Sigmoid colon (tissue), 7 donors: ENCODE measurements at regions of chr1 and their contacts with region 1.

Region 1: DNA sequence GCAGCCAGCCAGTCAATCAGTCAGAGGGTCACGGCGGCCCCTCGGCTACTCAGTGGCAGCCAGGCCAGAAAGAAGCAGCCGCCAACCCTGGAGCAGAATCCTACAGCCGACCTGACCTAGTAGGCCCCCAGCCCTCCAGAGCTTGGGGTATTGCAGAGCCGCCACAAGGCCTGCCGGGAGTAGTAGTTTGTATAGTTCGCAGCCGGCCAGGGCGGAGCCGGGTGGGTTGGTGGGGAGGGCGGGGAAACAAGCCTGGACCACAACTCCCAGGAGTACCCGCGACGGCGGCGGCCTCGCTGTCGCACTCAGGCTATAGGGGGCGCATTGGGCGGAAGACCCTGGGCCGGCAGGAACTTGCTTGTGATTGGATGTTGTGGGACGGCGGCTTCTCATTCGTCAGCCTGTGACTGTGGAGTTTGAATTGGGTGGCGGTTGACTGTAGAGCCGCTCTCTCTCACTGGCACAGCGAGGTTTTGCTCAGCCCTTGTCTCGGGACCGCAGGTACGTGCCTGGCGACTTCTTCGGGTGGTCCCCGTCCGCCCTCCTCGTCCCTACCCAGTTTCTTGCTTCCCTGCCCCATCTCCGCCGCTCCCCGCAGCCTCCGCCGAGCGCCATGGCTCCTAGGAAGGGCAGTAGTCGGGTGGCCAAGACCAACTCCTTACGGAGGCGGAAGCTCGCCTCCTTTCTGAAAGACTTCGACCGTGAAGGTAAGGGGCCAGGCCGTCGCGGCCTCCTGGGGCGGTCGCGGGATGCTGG is at the start of gene CDCA8:
- DNase-seq: peak; percentile 99
- H3K4me3 ChIP-seq: peak within 1 kb of the TSS; percentile 75 to 94 (median 82)
- H3K27ac ChIP-seq: peak within 1 kb of the TSS; percentile 87 to 94 (median 90)
- H3K4me1 ChIP-seq: peaks cover 0 to 37% (median 31%) of the 10 kb centered on the region in 4 donors
- H3K27me3 ChIP-seq: no peaks in the 10 kb centered on the region
- CTCF ChIP-seq: peak in 2 of 4 experiments; percentile 13 to 41
- EP300 ChIP-seq: no peak
- POLR2A ChIP-seq: peak in 1 of 2 donors; percentile 14
- total RNA-seq, gene CDCA8: under 0.01 to 0.55 (median 0.16) TPM in 3 of 4 donors, not detected in the other

Region 2: DNA sequence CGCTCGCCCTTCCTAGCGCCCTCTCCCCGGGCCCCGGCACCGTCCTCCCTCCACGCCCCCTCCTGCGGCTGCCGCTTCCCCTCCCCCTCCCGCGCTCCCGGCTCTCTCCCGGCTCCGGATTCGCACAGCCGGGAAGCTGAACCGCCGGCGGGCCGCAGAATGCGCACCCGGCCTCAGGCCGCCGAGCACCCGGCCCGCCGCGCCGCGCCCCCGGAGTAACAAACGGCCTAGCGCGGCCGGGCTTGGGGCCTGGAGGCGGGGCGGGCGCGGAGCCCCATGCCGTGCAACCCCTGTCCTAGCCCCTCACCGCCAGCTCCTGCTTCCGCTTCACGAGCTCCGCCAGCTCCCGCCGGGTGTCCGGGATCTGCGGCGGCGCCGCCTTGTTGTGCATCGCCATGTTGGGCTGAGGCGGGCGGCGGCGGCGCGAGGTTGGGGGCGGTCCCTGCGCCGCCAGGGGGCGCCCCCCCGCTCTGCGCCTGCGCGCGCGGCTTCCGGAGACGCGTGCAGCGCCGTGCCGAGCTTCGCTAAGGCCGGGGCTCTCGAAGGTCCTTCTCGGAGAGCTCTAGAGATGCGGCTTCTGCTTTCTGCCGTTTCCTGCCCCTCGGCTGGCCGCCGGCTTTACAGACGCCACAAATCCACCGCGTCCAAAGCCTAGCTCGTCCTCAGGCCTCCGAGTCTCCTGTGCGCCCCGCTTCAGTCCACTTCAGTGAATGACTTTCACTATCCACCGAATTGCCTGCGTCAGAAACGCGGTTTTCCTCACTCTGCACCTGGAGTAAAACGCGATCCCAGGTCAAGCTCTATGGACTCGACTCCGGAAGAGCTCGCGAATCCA is 177.7 kb before region 1 on chr1 and contains the start of gene MEAF6:
- intact Hi-C with region 1: loop called (anchors 5 kb)
- DNase-seq: peak; percentile 90
- H3K4me3 ChIP-seq: peak within 1 kb of the TSS; percentile 50 to 99 (median 84)
- H3K27ac ChIP-seq: peak within 1 kb of the TSS; percentile 92 to 98 (median 96)
- H3K4me1 ChIP-seq: peaks cover 0 to 32% (median 20%) of the 10 kb centered on the region in 4 donors
- H3K27me3 ChIP-seq: no peaks in the 10 kb centered on the region
- CTCF ChIP-seq: peak in 2 of 4 experiments; percentile 16 to 82
- EP300 ChIP-seq: no peak
- POLR2A ChIP-seq: peak; percentile 76 to 77
- total RNA-seq, gene MEAF6: 64.0 to 84.5 (median 79.9) TPM

Region 3: GRCh38 chr1:37553927-37554808 is 138.1 kb before region 1 on chr1 and contains the start of gene SNIP1:
- intact Hi-C with region 1: loop called (anchors 5 kb)
- DNase-seq: peak; percentile 97
- H3K4me3 ChIP-seq: peak within 1 kb of the TSS; percentile 85 to 96 (median 93)
- H3K27ac ChIP-seq: peak within 1 kb of the TSS; percentile 86 to 92 (median 90)
- H3K4me1 ChIP-seq: peaks cover 0 to 57% (median 31%) of the 10 kb centered on the region in 4 donors
- H3K27me3 ChIP-seq: no peaks in the 10 kb centered on the region
- CTCF ChIP-seq: no peak
- EP300 ChIP-seq: peak in 1 of 4 donors; percentile 42
- POLR2A ChIP-seq: peak; percentile 64 to 75
- total RNA-seq, gene SNIP1: 7.2 to 20.4 (median 12.8) TPM

Region 4: DNA sequence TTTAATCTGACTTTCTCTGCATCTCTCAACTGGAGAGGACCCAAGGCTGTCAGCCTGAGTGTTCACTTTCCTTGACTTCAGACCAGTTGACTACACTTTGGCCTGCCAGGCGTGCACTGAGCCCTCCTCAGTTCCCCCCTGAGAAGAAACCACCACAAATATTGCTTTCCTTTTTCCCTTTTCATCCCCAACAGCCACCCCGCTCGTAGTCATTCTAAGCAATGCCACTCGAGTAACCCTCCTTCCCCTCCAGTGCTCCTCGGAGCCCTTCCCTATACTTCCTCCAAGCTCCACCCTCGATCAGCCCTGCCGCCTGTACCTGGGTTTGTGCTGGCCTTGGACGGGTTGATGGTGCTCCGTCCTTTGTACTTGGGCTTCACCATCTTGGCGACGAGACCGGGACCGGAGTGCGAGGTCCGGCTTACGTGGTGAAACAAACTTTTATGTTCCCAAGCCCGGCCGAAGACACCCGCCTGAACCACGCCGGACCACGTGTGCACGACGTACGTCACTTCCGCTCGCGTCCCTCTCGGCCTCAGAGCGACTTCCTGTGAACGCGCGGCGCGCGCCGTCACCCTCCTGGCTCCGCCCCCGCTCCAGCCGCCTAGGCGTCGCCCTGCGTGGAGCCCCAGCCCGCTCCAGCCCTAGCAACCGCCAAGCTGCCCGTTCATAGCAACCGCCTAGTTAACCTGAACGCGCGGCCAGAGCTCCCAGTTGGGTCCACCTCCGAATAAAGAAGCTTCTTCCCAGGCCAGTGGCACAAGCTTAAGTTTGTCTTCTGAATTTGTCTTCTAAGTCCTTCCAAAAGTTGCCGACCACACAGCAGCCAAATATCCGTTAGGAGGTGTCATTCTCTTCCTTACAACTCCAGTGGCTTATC is 96.6 kb before region 1 on chr1 and contains the start of gene GNL2:
- intact Hi-C with region 1: loop called (anchors 5 kb)
- DNase-seq: peak; percentile 99
- H3K4me3 ChIP-seq: peak within 1 kb of the TSS; percentile 75 to 84 (median 80)
- H3K27ac ChIP-seq: peak within 1 kb of the TSS; percentile 83 to 85 (median 83)
- H3K4me1 ChIP-seq: peaks cover 0 to 27% (median 16%) of the 10 kb centered on the region in 4 donors
- H3K27me3 ChIP-seq: no peaks in the 10 kb centered on the region
- CTCF ChIP-seq: no peak
- EP300 ChIP-seq: peak in 1 of 4 donors; percentile 67
- POLR2A ChIP-seq: peak; percentile 68 to 79
- total RNA-seq, gene GNL2: 26.7 to 50.4 (median 29.6) TPM

Region 5: DNA sequence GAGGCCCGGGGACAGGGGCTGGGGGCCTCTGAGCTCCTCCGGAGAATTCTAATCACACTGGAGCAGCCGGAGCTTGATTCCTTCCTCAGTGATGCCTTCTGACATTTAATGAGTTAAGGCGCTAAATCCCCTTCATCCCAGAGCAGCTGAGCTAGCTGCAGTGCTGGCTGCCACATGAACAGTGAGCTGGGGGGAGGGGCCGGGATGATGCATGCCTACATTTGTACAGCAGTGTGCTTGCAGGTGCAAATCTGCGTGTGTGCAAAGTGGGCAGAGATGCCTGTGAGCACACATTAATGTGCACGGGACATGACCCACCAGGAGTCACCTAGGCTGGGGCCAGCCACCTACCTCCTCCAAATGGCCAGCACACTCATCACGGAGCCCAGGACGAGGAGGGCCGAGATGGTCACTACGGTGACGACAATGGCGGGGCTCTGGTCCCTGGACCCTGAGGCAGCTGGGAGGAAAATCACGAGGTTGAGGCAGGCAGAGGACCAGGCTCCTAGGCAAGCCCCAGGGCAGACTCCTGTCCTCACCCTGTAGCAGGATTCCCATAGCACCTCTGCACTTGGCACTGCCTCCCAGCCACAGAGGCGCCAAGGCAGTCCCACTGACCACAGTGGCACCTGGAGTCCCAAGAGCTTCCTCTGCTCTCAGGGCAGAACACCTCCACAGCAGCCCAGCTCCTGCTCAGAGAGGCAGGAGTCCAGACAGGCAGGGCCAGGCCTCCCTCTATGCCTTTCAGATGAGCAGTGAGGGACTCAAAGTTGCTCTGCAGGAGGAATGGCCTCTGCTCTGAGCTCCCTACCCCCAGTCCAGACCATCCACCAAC is 34.7 kb after region 1 on chr1:
- intact Hi-C with region 1: no loop called
- DNase-seq: no peak
- H3K4me3 ChIP-seq: no peak overlapping the region
- H3K27ac ChIP-seq: no peak overlapping the region
- H3K4me1 ChIP-seq: no peaks in the 10 kb centered on the region
- H3K27me3 ChIP-seq: peaks cover 0 to 15% (median 0%) of the 10 kb centered on the region in 3 donors
- CTCF ChIP-seq: no peak
- EP300 ChIP-seq: no peak
- POLR2A ChIP-seq: no peak

Region 6: DNA sequence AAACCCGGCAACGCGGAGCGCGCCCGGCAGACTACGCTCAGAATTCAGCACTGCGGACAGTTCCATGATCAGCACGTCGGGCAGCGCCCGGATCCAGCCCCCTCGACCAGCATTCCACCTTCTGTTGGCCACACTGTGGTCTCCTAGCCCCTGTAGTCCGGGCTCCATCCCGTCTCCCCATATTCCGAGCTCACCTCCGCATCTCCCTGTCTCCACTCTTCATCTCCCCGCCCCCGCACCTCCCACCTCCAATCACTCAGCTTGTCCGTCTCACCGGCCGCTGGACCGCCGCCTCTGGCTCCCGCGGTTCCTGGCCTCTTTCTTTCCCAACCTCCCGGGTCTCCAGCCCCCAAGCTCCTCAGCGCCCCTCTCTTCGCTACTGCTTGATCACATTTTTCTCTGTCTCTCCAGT is 72.2 kb after region 1 on chr1:
- intact Hi-C with region 1: no loop called
- DNase-seq: no peak
- H3K4me3 ChIP-seq: no peak overlapping the region
- H3K27ac ChIP-seq: no peak overlapping the region
- H3K4me1 ChIP-seq: no peaks in the 10 kb centered on the region
- H3K27me3 ChIP-seq: peaks cover 23 to 91% (median 48%) of the 10 kb centered on the region in 3 donors
- CTCF ChIP-seq: no peak
- EP300 ChIP-seq: no peak
- POLR2A ChIP-seq: no peak

Region 7: DNA sequence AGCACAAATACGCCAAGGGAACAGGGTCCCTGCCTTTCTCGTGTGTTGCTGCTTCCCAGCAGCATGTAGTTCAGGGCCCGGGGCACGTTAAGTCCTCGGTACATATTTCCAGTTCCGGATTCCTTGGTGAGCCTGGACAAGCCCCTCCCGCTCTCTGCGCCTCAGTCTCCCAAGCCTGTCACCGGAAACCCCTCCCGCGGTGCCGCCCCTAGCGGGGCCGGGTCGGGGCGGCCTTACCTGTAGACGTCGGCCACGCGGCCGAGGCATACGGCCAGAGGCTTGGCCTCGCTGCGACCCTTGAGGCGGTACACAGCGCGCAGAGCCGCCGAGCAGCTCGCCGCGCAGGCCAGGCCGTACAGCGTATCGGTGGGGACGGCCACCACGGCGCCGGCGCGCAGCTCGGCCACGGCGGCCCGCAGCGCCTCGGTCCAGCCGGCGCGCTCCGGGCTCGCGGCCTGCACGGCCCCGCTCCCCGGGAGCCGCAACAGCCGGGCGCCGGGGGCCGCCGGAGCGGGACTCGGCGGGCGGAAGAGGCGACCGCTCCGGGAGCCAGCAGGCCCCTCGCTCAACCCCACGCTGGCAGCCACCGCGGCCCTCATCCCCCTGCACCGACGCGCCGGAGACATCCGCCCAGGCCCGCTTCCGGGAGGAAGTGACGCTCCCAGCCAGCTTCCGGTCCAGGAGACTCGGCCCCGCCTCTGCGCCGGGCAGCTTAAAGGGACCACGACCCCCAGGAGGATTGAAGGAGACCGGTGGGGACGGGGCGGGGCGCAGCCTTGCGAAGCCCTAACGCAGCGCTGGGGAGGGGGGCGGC is 115.5 kb after region 1 on chr1 and contains the starts of genes C1orf122 and YRDC:
- intact Hi-C with region 1: loop called (anchors 1 kb)
- DNase-seq: peak; percentile 97
- H3K4me3 ChIP-seq: peak within 1 kb of the TSS; percentile 77 to 90 (median 86)
- H3K27ac ChIP-seq: peak within 1 kb of the TSS; percentile 91 to 98 (median 97)
- H3K4me1 ChIP-seq: peaks cover 0 to 34% (median 25%) of the 10 kb centered on the region in 4 donors
- H3K27me3 ChIP-seq: no peaks in the 10 kb centered on the region
- CTCF ChIP-seq: no peak
- EP300 ChIP-seq: no peak
- POLR2A ChIP-seq: peak; percentile 60 to 73
- total RNA-seq, gene C1orf122: 61.9 to 105 (median 90.8) TPM
- total RNA-seq, gene YRDC: 4.4 to 12.4 (median 9.5) TPM

Region 8: DNA sequence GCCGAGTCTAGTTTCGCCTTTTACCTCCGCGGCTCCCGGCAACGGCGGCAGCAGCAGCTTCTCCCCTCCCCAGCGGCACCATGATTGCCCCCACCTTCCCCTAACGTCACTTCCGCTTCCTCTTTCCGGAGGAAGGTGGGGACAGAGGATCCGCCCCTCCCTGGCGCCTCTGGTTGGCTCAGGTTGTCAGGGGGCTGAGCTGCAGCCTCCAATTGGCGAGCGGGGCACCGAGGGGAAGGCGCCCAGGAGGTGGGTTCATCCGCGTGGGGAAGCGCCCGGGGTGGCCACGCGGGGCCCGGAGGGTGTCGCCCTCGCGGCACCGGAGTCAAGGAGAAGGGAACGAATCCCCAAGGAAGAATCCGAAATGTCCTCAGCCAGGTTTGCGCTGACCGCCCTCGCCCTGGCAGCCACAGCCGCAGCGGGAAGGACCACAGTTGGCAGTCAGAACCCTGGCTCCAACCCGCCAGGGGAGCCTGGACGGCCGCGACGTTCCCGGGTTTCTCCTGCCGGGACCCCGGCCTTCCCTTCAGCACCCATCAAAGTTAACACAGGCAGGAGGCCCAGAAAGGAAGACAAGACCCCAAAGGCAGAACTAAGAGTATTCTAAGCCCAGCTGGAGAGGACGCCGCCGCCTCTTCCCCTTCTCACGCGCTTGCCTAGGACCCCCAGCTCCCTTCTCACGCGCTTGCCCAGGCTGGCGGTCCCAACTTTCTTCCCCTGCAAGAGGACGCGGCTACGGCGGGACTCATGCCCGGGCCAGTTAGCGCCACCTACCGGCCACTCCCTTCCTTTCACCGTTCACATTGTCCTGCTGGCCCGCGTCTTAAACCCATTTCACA is 167.5 kb after region 1 on chr1 and contains the start of gene MTF1:
- intact Hi-C with region 1: loop called (anchors 2 kb)
- DNase-seq: peak; percentile 99
- H3K4me3 ChIP-seq: peak within 1 kb of the TSS; percentile 76 to 96 (median 86)
- H3K27ac ChIP-seq: peak within 1 kb of the TSS; percentile 92 to 97 (median 96)
- H3K4me1 ChIP-seq: peaks cover 0 to 46% (median 42%) of the 10 kb centered on the region in 4 donors
- H3K27me3 ChIP-seq: no peaks in the 10 kb centered on the region
- CTCF ChIP-seq: peak; percentile 74 to 92 (median 86)
- EP300 ChIP-seq: no peak
- POLR2A ChIP-seq: peak; percentile 49 to 81
- total RNA-seq, gene MTF1: 3.9 to 6.6 (median 4.4) TPM

Region 9: DNA sequence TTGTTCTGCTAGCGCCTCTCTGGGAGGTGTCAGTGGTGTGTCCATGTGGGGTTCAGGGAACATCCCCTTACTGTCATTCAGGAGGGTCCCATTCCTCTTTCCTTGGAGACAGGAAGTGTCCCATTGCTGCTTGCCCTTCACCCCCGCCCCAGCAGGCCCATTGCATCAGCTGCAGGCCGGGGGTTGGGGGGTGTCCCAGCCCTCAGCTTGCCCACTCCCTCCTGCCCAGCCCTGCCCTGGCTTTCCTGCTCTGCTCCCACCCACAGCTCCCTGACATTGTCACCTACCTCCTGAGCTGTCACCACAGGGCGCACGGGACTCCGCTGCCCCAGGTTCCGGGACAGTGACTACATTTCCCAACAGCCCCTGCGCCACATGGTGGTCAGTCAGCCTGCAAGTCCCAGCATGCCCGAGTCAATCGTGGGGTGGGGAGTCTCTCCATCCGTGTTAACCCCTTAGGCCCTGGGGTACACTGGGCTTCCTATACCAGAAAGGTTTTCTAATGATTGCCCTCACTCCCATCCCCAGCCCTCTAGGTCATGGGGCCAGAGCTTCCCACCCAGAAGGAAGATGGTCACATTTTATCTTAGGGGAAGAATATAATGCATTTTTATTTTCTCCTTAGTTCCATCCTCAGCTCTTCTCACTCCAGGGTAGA is 254.6 kb after region 1 on chr1 and contains the start of gene INPP5B:
- intact Hi-C with region 1: loop called (anchors 10 kb)
- DNase-seq: peak; percentile 95
- H3K4me3 ChIP-seq: peak within 1 kb of the TSS; percentile 71 to 87 (median 78)
- H3K27ac ChIP-seq: peak within 1 kb of the TSS; percentile 87 to 94 (median 90)
- H3K4me1 ChIP-seq: peaks cover 0 to 27% (median 21%) of the 10 kb centered on the region in 4 donors
- H3K27me3 ChIP-seq: no peaks in the 10 kb centered on the region
- CTCF ChIP-seq: peak in 1 of 4 experiments; percentile 21
- EP300 ChIP-seq: no peak
- POLR2A ChIP-seq: peak; percentile 41 to 54
- total RNA-seq, gene INPP5B: 29.0 to 34.1 (median 31.7) TPM